Motor neuron (in vitro differentiated cells): ENCODE measurements at regions of chr5 and their contacts with region 1.

Region 1: DNA sequence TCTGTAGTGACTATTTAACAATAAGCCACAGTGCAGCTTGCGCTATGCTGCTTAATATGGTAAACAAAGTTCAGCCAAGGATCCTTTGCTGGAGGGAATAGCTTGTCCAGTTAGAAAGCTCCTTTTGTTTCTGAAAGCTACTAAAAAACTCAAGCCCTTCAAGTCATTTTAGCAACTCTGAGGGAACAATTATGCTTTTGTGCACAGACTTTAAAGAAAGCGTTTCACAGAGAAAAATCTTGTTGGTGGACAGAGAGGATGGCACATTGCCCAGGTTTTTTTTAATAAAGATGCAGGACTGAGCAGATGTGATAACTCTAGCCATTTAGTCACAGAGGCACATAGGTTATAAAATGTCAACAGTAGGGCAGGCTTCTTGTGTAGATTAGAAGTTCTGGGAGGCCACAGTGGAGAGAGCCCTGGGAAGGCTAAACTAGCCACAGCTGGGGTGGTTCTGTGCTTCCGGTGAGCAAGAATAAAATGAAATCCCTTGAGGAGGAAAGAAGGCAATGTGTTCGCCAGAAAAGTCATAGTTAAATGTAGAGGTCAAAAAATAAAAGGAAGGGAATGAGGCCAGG is 63.4 kb downstream of the ALDH7A1 start:
- ATAC-seq: peak in 6 of 8 experiments; percentile 36 to 93 (median 76)
- H3K4me3 ChIP-seq: no peak overlapping the region
- H3K27ac ChIP-seq: no peak overlapping the region
- H3K4me1 ChIP-seq: peaks cover 7 to 8% of the 10 kb centered on the region in 2 donors

Region 2: GRCh38 chr5:125940694-125941093 is 590.9 kb before region 1 on chr5:
- in situ Hi-C with region 1: no loop called
- ATAC-seq: no peak
- H3K4me3 ChIP-seq: no peak overlapping the region
- H3K27ac ChIP-seq: no peak overlapping the region
- H3K4me1 ChIP-seq: no peaks in the 10 kb centered on the region

Region 3: DNA sequence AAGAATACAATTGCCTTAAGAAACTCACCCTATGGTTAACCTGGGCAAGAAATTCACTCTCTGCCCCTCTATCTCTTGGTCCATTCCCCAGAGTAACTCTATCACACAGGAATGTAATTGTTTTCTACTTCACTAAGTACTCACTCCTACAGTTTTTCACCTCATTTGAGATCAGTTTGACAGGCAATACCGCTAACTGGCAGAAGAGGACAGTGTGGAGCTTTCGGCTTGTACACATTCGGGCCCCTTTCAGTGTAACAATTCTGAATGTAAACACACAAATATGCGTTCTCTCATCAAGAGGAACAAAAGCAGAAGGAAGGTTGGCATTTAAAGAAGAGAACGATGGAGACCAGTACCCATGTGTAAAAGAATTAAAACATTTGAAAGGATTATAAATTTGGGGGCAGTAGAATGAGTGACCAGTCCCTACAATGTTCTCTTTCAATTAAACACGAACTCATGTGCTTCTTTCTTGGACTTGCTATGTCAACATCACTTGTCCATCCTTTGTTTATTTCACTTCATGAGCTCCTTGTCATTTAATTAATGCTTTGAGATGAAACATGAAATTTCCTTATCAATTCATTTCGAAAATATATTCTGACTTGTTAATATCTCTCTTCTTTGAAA is 297.0 kb before region 1 on chr5:
- in situ Hi-C with region 1: loop called in 1 of 9 experiments (anchors 10 kb)
- ATAC-seq: peak in 3 of 8 experiments; percentile 52 to 77 (median 74)
- H3K4me3 ChIP-seq: no peak overlapping the region
- H3K27ac ChIP-seq: no peak overlapping the region
- H3K4me1 ChIP-seq: no peaks in the 10 kb centered on the region

Region 4: GRCh38 chr5:126348855-126349635 is 182.6 kb before region 1 on chr5:
- in situ Hi-C with region 1: loop called in 6 of 9 experiments (anchors 10 to 25 kb)
- ATAC-seq: peak in 5 of 8 experiments; percentile 72 to 96 (median 94)
- H3K4me3 ChIP-seq: no peak overlapping the region
- H3K27ac ChIP-seq: no peak overlapping the region
- H3K4me1 ChIP-seq: peaks cover 23 to 24% of the 10 kb centered on the region in 2 donors

Region 5: DNA sequence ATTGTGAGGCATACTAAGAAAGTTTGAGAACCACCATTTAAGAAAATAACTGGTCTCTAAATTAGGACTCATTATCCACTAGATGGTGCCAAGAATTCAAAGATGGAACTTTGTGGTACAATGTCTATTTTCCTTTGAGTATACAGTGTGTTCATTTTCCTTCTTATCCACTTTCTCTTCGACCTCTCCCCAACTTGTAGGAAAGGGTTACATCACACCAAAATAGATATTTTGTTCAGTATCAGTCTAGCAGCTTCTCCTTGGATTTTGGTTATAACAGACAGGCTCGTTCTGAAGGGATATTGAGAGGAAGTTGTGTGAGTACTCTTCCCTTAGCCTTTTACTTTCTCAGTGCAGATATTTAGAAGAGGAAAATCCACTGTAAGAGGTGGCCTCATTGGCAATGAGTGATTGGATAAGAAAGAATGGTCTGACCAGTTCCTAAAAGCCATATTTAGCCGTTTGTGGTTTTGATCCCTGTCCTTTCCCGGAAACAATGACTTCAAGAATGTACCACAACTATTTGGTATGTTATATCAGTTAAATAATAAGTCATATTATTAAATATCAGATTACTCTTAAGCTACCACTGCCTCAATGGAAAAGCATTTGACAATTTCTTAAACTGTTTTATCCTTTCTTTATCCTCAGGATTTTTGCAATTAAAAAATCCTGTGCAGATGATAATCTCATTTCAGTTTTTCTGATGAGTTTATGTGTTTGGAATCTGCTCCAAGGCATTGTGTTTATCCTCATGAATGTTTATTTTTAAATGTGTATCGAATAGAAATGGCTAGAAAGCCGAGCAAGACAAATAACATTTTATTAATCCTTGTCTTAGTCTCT is 177.4 kb before region 1 on chr5:
- in situ Hi-C with region 1: loop called in 6 of 9 experiments (anchors 10 to 25 kb)
- ATAC-seq: peak in 4 of 8 experiments; percentile 70 to 91 (median 80)
- H3K4me3 ChIP-seq: no peak overlapping the region
- H3K27ac ChIP-seq: no peak overlapping the region
- H3K4me1 ChIP-seq: peaks cover 12 to 13% of the 10 kb centered on the region in 2 donors

Region 6: DNA sequence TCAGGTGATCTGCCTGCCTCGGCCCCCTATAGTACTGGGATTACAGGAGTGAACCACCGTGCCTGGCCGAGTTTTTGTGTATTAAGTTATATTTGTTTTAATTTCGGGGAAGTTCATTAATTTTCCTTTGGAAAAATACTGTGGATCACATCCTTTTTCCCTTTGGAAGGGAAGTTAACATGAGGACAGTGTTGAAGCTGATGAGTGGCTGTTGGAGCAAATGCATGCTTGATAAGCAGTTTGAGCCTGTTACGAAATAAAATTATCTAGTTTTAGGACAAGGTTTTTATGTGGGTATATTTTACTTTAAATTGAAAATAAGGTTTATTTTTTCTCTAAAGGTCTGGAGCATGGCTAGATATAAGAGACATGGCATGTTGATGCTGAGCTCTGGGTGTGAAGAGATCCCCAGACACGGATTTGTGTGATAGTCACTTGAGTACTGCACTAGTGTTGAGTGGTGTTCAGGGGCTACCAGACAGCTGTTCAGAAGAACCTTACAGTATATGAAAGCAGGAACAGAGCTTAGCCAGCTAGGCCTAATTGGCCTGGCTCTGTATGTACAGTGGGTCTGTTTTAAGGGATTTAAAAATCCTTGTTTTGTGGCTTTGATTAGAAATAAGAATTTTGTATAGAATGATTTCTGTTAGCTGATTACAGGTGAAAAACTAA is 262.7 kb after region 1 on chr5:
- in situ Hi-C with region 1: no loop called
- ATAC-seq: no peak
- H3K4me3 ChIP-seq: no peak overlapping the region
- H3K27ac ChIP-seq: no peak overlapping the region
- H3K4me1 ChIP-seq: peaks cover 0 to 3% of the 10 kb centered on the region in 2 donors